ENCODE measurements at regions of chr2 and their contacts with region 1.

Region 1: DNA sequence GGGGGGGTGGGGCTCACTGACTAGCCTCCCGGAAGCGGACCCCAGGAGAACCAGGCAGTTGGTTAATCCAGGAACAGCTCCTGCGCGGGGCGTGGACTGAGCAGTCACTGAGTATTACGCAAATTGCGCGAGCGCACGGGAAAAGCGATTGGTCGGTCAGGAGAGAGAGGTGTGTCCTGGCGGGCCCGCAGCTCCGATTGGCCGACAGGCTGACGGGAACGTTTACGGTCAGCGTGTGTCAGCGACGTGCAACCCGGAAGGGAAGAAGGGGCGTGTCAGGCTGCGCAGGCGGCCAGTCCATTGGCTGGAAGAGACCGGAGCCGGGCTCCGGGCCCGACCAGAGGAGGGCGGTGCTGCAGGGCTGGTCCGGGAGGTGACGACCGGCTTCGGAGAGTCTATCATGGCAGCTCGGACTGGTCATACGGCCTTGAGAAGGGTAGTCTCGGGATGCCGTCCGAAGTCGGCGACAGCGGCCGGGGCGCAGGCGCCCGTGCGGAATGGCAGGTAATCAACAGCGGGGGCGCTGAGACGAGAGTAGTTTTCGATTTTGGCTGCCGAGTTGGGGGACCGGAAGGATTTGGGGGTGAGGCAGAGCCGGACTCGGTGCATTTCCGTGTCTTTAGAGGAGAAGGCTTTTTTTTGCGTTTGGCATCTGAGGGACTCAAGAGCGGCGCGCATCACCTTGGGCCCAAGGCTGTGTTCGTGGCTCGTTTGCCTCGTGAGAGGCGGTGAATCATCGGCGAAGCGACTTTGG is at the start of gene COQ10B:
- DNase-seq: peak; percentile 99
- ATAC-seq: peak; percentile 95
- H3K4me3 ChIP-seq: peak within 1 kb of the TSS; percentile 84
- H3K27ac ChIP-seq: peak within 1 kb of the TSS; percentile 92
- H3K4me1 ChIP-seq: peaks cover 11% of the 10 kb centered on the region
- H3K27me3 ChIP-seq: no peaks in the 10 kb centered on the region
- CTCF ChIP-seq: no peak
- total RNA-seq, gene COQ10B: 23.5 and 25.7 TPM in 2 replicates

Region 2: DNA sequence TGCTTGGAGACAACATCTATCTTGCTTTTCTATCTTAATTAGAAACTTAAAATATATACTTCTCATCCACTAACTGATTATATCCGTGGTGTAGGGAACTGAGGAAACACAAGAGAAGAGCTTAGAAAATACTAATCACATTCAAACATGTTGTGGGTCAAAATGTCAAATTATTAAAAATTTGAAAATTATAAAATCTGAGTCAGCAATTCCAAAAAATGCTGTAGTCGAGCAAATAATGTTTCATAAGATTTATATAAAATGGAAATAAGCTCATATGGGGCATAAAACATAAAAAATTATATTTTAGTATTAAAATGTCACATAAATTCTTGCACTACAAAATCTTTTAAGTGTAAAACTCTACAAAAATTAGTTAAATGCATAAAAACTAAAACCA is 47.8 kb before region 1 on chr2:
- CTCF ChIA-PET with region 1: no interaction called
- POLR2A ChIA-PET with region 1: interaction called, 29 read pairs
- intact Hi-C with region 1: no loop called
- DNase-seq: no peak
- ATAC-seq: no peak
- H3K4me3 ChIP-seq: no peak overlapping the region
- H3K27ac ChIP-seq: no peak overlapping the region
- H3K4me1 ChIP-seq: no peaks in the 10 kb centered on the region
- H3K27me3 ChIP-seq: no peaks in the 10 kb centered on the region
- CTCF ChIP-seq: no peak

Region 3: GRCh38 chr2:197434541-197435513 is 18.5 kb before region 1 on chr2 and contains the start of gene SF3B1:
- CTCF ChIA-PET with region 1: no interaction called
- POLR2A ChIA-PET with region 1: interaction called, 11 read pairs
- intact Hi-C with region 1: loop called (anchors 1 kb)
- DNase-seq: peak; percentile 98
- ATAC-seq: peak; percentile 91
- H3K4me3 ChIP-seq: peak within 1 kb of the TSS; percentile 81
- H3K27ac ChIP-seq: peak within 1 kb of the TSS; percentile 76
- H3K4me1 ChIP-seq: peaks cover 23% of the 10 kb centered on the region
- H3K27me3 ChIP-seq: no peaks in the 10 kb centered on the region
- CTCF ChIP-seq: no peak
- total RNA-seq, gene SF3B1: 125 and 143 TPM in 2 replicates

Measured in PC-3 (cell line).